ENCODE measurements at regions of chr22 and their contacts with region 1.

Region 1: DNA sequence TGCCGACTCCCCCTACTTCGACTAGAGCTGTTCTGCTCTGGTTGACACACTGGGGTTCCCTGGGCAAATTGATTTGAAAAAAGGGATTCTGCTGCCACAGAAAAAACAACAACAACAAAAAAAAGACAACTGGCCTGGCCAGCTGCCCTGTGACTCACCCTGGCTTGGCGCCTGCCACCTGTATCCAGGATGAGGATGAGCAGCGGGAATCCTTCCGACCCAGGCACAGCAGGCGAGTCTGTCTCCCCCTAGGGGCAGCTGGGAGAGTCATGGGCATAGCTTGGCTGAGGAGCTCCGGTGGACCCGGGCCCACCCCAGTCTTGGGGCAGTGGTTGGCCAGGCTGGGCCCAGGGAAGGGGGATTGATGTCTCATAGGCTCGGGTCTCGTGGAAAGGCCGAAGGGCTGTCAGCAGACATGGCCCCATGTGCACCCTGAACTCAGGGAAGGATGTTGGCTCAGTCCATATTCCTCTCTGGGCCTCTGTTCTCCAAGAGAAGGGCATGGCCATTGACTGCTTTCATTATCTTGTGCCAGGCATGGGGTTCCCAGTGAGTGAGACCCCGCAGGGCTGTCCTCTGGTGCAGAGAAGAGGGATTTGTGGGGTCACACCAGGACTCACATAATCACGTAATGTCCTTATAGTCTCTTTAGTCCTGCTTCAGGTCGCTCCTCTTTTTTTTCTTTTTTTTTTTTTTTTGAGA is 10.4 kb upstream of the SUN2 start:
- DNase-seq: peak; percentile 68 to 89
- H3K4me3 ChIP-seq: no peak overlapping the region
- H3K27ac ChIP-seq: no peak overlapping the region
- H3K4me1 ChIP-seq: peaks cover 0 to 6% (median 1%) of the 10 kb centered on the region in 4 experiments; a peak in 4 of 7 replicates
- H3K27me3 ChIP-seq: no peaks in the 10 kb centered on the region; a peak in 1 of 7 replicates
- CTCF ChIP-seq: peak; percentile 83 to 97 (median 94)
- EP300 ChIP-seq: no peak
- POLR2A ChIP-seq: no peak
- RAD21 ChIP-seq: peak; percentile 54 to 68

Region 2: GRCh38 chr22:38554281-38554680 is 211.9 kb before region 1 on chr22:
- CTCF ChIA-PET with region 1: no interaction called
- POLR2A ChIA-PET with region 1: no interaction called
- DNase-seq: no peak
- H3K4me3 ChIP-seq: no peak overlapping the region
- H3K27ac ChIP-seq: no peak overlapping the region
- H3K4me1 ChIP-seq: no peaks in the 10 kb centered on the region
- H3K27me3 ChIP-seq: no peaks in the 10 kb centered on the region
- CTCF ChIP-seq: no peak
- EP300 ChIP-seq: no peak
- POLR2A ChIP-seq: no peak
- RAD21 ChIP-seq: no peak

Region 3: GRCh38 chr22:38733329-38733723 is 32.9 kb before region 1 on chr22:
- CTCF ChIA-PET with region 1: interaction called, 124 read pairs
- POLR2A ChIA-PET with region 1: interaction called, 12 read pairs
- DNase-seq: peak in 1 of 2 experiments; percentile 80
- H3K4me3 ChIP-seq: no peak overlapping the region
- H3K27ac ChIP-seq: no peak overlapping the region
- H3K4me1 ChIP-seq: no peaks in the 10 kb centered on the region
- H3K27me3 ChIP-seq: no peaks in the 10 kb centered on the region
- CTCF ChIP-seq: peak; percentile 57 to 89 (median 70)
- EP300 ChIP-seq: no peak
- POLR2A ChIP-seq: no peak
- RAD21 ChIP-seq: peak; percentile 43 to 63

Region 4: DNA sequence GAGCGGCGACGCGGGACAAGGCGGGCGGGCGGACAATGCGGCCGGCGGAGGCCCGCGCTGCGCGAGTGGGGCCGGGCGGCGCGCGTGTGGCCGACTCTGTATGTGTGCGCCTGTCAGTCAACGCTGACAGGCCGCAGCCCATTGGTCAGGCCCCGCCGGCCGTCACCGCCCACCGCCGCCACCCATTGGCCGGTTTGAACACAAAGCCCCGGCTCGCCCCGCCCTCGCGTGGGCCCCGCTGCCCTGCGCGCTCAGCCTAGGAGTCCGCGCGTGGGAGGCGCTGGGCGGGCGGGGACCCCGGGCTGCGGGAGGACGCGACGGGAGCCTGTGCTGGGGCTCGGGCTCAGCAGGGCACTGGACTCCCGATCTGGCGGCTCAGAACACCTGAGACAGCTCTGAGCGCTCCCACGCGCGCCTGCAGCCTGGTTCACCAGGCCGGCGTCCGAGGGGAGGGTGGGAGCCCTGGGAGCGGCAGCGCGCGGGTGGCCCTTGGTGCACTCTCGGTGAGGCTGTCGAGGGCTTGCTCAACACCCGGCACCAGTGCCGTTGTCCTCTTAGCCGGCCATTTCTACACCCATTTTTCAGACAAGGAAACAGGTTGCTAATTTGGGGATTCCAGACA is 10.2 kb before region 1 on chr22 and contains the start of gene SUN2:
- CTCF ChIA-PET with region 1: interaction called, 44 read pairs
- POLR2A ChIA-PET with region 1: interaction called, 3 read pairs
- DNase-seq: peak in 1 of 2 experiments; percentile 88
- H3K4me3 ChIP-seq: peak within 1 kb of the TSS; percentile 57 to 81 (median 60)
- H3K27ac ChIP-seq: no peak within 1 kb of the TSS; the same call in 1 of the 2 replicates
- H3K4me1 ChIP-seq: peaks cover 4 to 16% (median 8%) of the 10 kb centered on the region in 4 experiments
- H3K27me3 ChIP-seq: peaks cover 0 to 7% (median 5%) of the 10 kb centered on the region in 4 experiments; a peak in 5 of 7 replicates
- CTCF ChIP-seq: no peak
- EP300 ChIP-seq: no peak
- POLR2A ChIP-seq: no peak
- RAD21 ChIP-seq: no peak
- total RNA-seq, gene SUN2: 10.5 and 11.7 TPM in 2 replicates

Region 5: GRCh38 chr22:38802671-38803121 is 36.5 kb after region 1 on chr22:
- CTCF ChIA-PET with region 1: interaction called, 10 read pairs
- POLR2A ChIA-PET with region 1: no interaction called
- DNase-seq: peak in 1 of 2 experiments; percentile 52
- H3K4me3 ChIP-seq: peak overlapping the region; percentile 45 to 63 (median 54)
- H3K27ac ChIP-seq: no peak overlapping the region
- H3K4me1 ChIP-seq: peaks cover 0 to 3% (median 0%) of the 10 kb centered on the region in 4 experiments; a peak in 2 of 7 replicates
- H3K27me3 ChIP-seq: peaks cover 0 to 8% (median 4%) of the 10 kb centered on the region in 4 experiments; a peak in 3 of 7 replicates
- CTCF ChIP-seq: no peak
- EP300 ChIP-seq: no peak
- POLR2A ChIP-seq: no peak
- RAD21 ChIP-seq: no peak

Region 6: GRCh38 chr22:38843201-38843715 is 77.0 kb after region 1 on chr22:
- CTCF ChIA-PET with region 1: interaction called, 11 read pairs
- POLR2A ChIA-PET with region 1: interaction called, 3 read pairs
- DNase-seq: peak; percentile 47 to 68
- H3K4me3 ChIP-seq: peak overlapping the region; percentile 48 to 70 (median 50)
- H3K27ac ChIP-seq: no peak overlapping the region
- H3K4me1 ChIP-seq: peaks cover 0 to 7% (median 3%) of the 10 kb centered on the region in 4 experiments; a peak in 4 of 7 replicates
- H3K27me3 ChIP-seq: peaks cover 16 to 47% (median 38%) of the 10 kb centered on the region in 4 experiments
- CTCF ChIP-seq: peak in 2 of 3 experiments; percentile 31 to 36; a peak in 3 of 4 replicates
- EP300 ChIP-seq: no peak
- POLR2A ChIP-seq: peak in 1 of 2 experiments; percentile 0; a peak in 1 of 3 replicates
- RAD21 ChIP-seq: peak in 1 of 2 experiments; percentile 7; a peak in 1 of 4 replicates

Region 7: GRCh38 chr22:38870312-38870746 is 104.1 kb after region 1 on chr22:
- CTCF ChIA-PET with region 1: interaction called, 79 read pairs
- POLR2A ChIA-PET with region 1: interaction called, 4 read pairs
- DNase-seq: peak in 1 of 2 experiments; percentile 93
- H3K4me3 ChIP-seq: peak overlapping the region in 1 of 4 experiments; percentile 97; a peak in 2 of 8 replicates
- H3K27ac ChIP-seq: no peak overlapping the region
- H3K4me1 ChIP-seq: peaks cover 3 to 15% (median 12%) of the 10 kb centered on the region in 4 experiments; a peak in 5 of 7 replicates
- H3K27me3 ChIP-seq: no peaks in the 10 kb centered on the region; a peak in 2 of 7 replicates
- CTCF ChIP-seq: peak; percentile 87 to 91 (median 89)
- EP300 ChIP-seq: no peak
- POLR2A ChIP-seq: no peak
- RAD21 ChIP-seq: peak; percentile 83 to 87